Activated naive CD4-positive, alpha-beta T cell treated with anti-CD3 and anti-CD28 coated beads, Interleukin-2, amount 10 ng/mL, durations not matched to agents 7 days and 5 days (primary cell): ENCODE measurements at regions of chr2 and their contacts with region 1.

Region 1: GRCh38 chr2:30115141-30115980 is 31.4 kb upstream of the YPEL5 start:
- DNase-seq: peak; percentile 79
- H3K4me3 Mint-ChIP-seq: no peak overlapping the region
- H3K27ac Mint-ChIP-seq: no peak overlapping the region
- H3K4me1 Mint-ChIP-seq: no peaks in the 10 kb centered on the region
- H3K27me3 Mint-ChIP-seq: peaks cover 16% of the 10 kb centered on the region

Region 2: DNA sequence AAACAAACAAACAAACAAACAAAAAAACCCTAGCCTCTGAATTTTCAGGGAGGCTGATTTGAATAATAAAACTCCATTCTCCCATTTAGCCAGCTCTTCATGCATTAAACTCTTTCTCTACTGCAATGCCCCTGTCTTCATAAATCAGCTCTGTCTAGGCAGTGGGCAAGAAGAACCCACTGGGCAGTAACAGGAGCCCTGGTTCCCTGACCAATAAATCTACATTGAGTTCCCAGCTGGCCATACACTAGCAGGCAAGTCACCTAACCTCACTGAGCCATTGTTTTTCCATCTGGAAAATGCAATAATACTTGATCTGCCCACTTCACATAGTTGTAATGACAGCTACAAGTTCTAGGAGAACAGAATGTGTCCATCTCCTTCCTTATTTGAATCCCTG is 26.2 kb before region 1 on chr2:
- CTCF ChIA-PET with region 1: interaction called, 51 read pairs
- DNase-seq: no peak
- H3K4me3 Mint-ChIP-seq: no peak overlapping the region
- H3K27ac Mint-ChIP-seq: no peak overlapping the region
- H3K4me1 Mint-ChIP-seq: no peaks in the 10 kb centered on the region
- H3K27me3 Mint-ChIP-seq: peaks cover 24% of the 10 kb centered on the region